Activated CD4-positive, alpha-beta memory T cell treated with anti-CD3 and anti-CD28 coated beads, Interleukin-2, amount 10 ng/mL, durations not matched to agents 7 days and 5 days (primary cell): ENCODE measurements at regions of chr2 and their contacts with region 1.

Region 1: GRCh38 chr2:68467077-68467960 is at the starts of genes APLF and FBXO48:
- DNase-seq: peak; percentile 98
- H3K4me3 Mint-ChIP-seq: peak within 1 kb of the TSS; percentile 96
- H3K27ac Mint-ChIP-seq: peak within 1 kb of the TSS; percentile 95
- H3K4me1 Mint-ChIP-seq: peaks cover 47% of the 10 kb centered on the region
- H3K27me3 Mint-ChIP-seq: no peaks in the 10 kb centered on the region
- total RNA-seq, gene APLF: 2.8 to 3.6 TPM
- total RNA-seq, gene FBXO48: 5.0 to 5.4 TPM

Region 2: GRCh38 chr2:68251187-68251854 is 216.0 kb before region 1 on chr2:
- CTCF ChIA-PET with region 1: no interaction called
- POLR2A ChIA-PET with region 1: interaction called, 17 read pairs
- DNase-seq: peak; percentile 83
- H3K4me3 Mint-ChIP-seq: peak overlapping the region; percentile 89
- H3K27ac Mint-ChIP-seq: peak overlapping the region; percentile 98
- H3K4me1 Mint-ChIP-seq: peaks cover 39% of the 10 kb centered on the region
- H3K27me3 Mint-ChIP-seq: no peaks in the 10 kb centered on the region

Region 3: GRCh38 chr2:68487773-68488355 is 20.5 kb after region 1 on chr2:
- CTCF ChIA-PET with region 1: interaction called, 38 read pairs
- POLR2A ChIA-PET with region 1: interaction called, 8 read pairs
- DNase-seq: no peak
- H3K4me3 Mint-ChIP-seq: no peak overlapping the region
- H3K27ac Mint-ChIP-seq: no peak overlapping the region
- H3K4me1 Mint-ChIP-seq: peaks cover 4% of the 10 kb centered on the region
- H3K27me3 Mint-ChIP-seq: no peaks in the 10 kb centered on the region

Region 4: DNA sequence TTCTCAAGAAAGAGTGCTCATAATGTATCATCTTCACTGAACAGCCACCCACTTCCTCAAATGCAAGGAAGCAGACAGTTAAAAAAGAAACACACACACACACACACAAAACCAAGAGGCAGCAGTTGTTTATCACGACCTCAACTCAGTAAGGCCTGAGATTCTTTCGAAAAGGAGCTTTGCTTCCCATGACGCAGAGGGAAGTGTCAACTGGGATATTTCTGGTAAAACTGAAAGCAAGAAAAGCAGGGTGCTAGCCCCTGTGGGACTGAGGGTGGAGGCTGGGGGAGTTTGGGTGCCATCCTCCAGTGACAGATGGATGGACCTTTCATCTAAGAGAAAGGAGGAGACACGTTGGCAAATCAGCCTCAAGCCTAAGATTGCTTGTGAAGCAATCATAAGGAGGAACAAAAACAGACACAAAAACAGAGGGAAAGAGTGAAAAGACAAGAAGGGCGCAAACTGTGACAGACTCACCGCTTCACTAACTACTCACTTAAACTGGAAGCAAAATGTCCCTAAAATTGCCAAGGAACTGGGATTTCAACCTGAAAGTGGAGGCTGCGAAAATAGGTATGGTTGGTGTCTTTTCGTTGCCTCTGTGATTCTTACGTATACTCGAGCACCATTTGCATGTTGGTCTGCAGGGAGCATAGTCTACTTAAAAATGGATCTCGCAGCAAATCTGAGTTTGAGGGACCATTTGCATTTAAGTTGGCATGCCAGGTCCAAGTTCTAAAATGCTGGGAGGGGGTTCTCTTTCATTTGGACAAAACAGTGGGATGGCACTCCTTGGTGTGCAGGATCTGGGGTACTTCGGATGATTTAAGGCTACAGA is 267.6 kb after region 1 on chr2 and contains the start of gene ARHGAP25:
- CTCF ChIA-PET with region 1: interaction called, 17 read pairs
- POLR2A ChIA-PET with region 1: interaction called, 25 read pairs
- DNase-seq: peak; percentile 68
- H3K4me3 Mint-ChIP-seq: no peak within 1 kb of the TSS
- H3K27ac Mint-ChIP-seq: no peak within 1 kb of the TSS
- H3K4me1 Mint-ChIP-seq: peaks cover 34% of the 10 kb centered on the region
- H3K27me3 Mint-ChIP-seq: no peaks in the 10 kb centered on the region
- total RNA-seq, gene ARHGAP25: 128 to 132 TPM

Region 5: DNA sequence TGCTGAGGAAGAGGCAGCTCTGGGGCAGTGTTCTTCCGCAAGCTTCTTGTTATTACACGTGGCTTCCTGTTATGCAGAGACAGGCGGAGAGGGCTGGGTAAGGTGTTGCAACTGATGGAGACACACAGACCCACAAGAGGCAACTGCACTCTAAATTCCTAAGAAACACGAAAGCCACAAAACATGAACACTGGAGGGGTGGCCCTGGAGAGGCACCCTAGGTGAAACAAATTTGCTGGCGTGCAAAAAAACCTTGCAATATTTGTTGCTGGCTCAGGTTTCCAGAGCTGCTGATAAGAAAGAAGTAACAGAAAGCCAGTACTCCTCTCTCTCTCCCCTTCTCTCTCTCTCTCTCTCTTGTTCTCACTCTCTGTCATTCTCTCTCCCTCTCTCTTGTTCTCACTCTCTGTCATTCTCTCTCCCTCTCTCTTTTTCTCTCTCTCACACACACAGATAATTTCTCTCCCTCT is 299.1 kb after region 1 on chr2:
- CTCF ChIA-PET with region 1: interaction called, 4 read pairs
- POLR2A ChIA-PET with region 1: interaction called, 31 read pairs
- DNase-seq: peak; percentile 84
- H3K4me3 Mint-ChIP-seq: peak overlapping the region; percentile 70
- H3K27ac Mint-ChIP-seq: peak overlapping the region; percentile 97
- H3K4me1 Mint-ChIP-seq: peaks cover 97% of the 10 kb centered on the region
- H3K27me3 Mint-ChIP-seq: no peaks in the 10 kb centered on the region